A673 (cell line): ENCODE measurements at regions of chr7 and their contacts with region 1.

Region 1: GRCh38 chr7:100632951-100633717 is 8.2 kb downstream of the TFR2 start:
- DNase-seq: peak; percentile 61
- H3K4me3 ChIP-seq: peak overlapping the region; percentile 48
- H3K27ac ChIP-seq: peak overlapping the region; percentile 15
- H3K4me1 ChIP-seq: peaks cover 7% of the 10 kb centered on the region
- H3K27me3 ChIP-seq: peaks cover 8% of the 10 kb centered on the region
- CTCF ChIP-seq: peak; percentile 42; the same call in 1 of the 2 replicates

Region 2: GRCh38 chr7:100586266-100587025 is 46.7 kb before region 1 on chr7 and contains the start of gene FBXO24:
- CTCF ChIA-PET with region 1: no interaction called
- POLR2A ChIA-PET with region 1: interaction called, 15 read pairs
- intact Hi-C with region 1: no loop called
- DNase-seq: peak; percentile 100
- H3K4me3 ChIP-seq: peak within 1 kb of the TSS; percentile 93
- H3K27ac ChIP-seq: peak within 1 kb of the TSS; percentile 96
- H3K4me1 ChIP-seq: peaks cover 25% of the 10 kb centered on the region
- H3K27me3 ChIP-seq: no peaks in the 10 kb centered on the region
- CTCF ChIP-seq: no peak
- total RNA-seq, gene FBXO24: 0.44 and 0.75 TPM in 2 replicates

Region 3: GRCh38 chr7:100680167-100680575 is 47.0 kb after region 1 on chr7:
- CTCF ChIA-PET with region 1: interaction called, 3 read pairs
- POLR2A ChIA-PET with region 1: interaction called, 13 read pairs
- intact Hi-C with region 1: no loop called
- DNase-seq: no peak
- H3K4me3 ChIP-seq: no peak overlapping the region
- H3K27ac ChIP-seq: peak overlapping the region; percentile 30
- H3K4me1 ChIP-seq: peaks cover 13% of the 10 kb centered on the region
- H3K27me3 ChIP-seq: no peaks in the 10 kb centered on the region
- CTCF ChIP-seq: no peak